ENCODE measurements at regions of chr4 and their contacts with region 1.

Region 1: DNA sequence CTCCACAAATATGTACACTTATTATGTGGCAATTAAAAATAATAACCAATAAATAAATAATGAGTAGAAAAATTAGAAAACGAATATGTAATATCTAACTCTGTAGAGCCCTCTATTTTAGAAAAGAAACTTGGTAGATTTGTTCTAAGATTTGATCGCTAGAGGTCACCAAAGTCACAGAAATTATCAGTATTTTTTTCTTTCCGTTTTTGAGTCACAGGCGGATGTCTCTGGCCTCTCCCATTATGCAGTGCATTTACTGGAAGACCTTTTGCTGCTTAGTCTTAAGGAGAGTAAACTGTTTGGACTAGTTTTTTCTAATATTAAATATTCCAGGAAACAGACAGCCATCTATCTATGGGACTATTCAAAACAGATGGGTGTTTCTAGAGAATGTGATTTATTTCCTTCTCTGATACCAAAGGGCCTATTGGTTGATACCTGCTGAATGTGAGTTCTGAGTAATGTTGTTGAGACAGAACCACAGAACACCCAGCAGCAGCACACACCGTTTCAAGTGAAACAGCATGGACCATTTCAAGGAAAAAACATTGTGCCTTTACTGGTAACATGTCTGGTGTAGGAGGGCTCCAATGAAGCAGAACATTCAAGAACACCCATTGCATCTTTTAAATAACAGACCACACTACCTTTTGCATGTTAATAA is 34.0 kb upstream of the GYPA start:
- DNase-seq: peak; percentile 49
- CTCF ChIP-seq: peak; percentile 22

Region 2: DNA sequence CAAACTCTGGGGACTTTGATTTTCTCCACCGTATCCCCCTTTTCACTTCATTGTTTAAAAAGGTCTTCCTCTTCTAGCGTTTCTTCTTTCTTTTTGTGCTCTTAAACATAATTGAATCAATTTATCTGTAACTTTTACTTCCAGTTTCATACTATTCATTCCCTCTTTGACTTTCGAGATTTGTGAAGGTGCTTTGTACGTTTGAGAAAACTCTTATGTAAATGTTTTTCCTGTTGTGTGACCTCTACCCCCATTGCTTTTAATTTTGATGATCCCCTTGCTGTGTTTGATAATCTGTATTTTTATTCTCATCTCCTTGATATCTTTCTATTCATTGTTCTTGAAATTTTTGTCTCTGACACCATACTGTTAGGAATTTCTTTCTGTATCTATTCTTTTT is 985.0 kb before region 1 on chr4:
- in situ Hi-C with region 1: no loop called
- DNase-seq: peak; percentile 21
- CTCF ChIP-seq: no peak

Region 3: DNA sequence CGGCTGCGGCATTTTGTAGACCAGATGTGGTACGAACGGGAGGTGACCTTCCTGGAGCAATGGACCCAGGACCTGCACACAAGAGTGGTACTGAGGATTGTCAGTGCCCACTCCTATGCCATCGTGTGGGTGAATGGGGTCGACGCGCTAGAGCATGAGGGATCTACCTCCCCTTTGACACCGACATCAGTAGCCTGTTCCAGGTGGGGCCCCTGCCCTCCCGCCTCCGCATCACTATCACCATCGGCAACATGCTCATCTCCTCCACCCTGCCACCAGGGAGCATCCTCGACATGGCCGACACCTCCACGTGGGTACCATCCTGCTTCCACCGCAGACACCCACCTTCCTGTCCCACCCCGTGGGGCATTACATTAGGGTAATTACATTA is 614.8 kb before region 1 on chr4:
- in situ Hi-C with region 1: no loop called
- DNase-seq: peak; percentile 27
- CTCF ChIP-seq: no peak

Region 4: GRCh38 chr4:144350706-144351105 is 176.2 kb after region 1 on chr4:
- in situ Hi-C with region 1: no loop called
- DNase-seq: no peak
- CTCF ChIP-seq: no peak

Region 5: DNA sequence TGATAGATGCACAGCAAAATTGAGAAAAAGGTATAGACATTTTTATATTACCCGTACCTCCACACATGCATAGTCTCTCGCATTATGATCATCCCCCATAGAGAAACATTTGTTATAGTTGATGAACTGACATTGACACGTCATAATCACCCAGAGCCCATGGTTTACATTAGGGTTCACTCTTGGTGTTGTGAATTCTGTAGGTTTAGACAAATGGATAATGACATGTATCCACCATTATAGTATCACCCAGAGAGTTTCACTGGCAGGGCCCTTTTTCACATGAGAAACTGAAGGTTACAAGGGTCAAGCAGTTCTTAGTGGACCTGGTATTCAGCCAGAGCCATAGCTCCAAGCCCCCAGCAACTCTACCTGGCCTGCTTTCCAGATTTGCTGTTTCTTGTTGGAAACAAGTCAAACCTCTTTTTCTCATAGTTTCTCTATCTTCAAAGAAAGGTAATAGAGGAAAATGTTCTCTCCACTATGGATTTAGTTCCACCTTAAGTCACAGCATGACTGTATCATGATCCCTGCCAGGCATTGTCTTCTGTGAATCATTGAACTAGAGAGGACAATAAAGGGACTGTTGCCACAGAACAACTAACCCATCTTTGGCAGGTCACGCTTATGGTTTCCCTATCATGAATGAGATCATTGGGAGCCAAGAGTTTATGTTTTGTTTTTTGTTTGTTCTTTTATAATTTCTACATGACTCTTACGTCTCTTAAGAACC is 535.4 kb after region 1 on chr4:
- in situ Hi-C with region 1: no loop called
- DNase-seq: no peak
- CTCF ChIP-seq: no peak

Region 6: GRCh38 chr4:144787365-144788258 is 613.1 kb after region 1 on chr4:
- in situ Hi-C with region 1: loop called (anchors 25 kb)
- DNase-seq: peak; percentile 35
- CTCF ChIP-seq: peak; percentile 46

Region 7: GRCh38 chr4:145061318-145061920 is 886.9 kb after region 1 on chr4:
- in situ Hi-C with region 1: loop called (anchors 10 kb)
- DNase-seq: peak; percentile 21
- CTCF ChIP-seq: peak; percentile 30

Region 8: GRCh38 chr4:145580906-145581305 is 1406.4 kb after region 1 on chr4:
- in situ Hi-C with region 1: loop called (anchors 25 kb)
- DNase-seq: no peak
- CTCF ChIP-seq: no peak

Measured in GM13976 (cell line).